Pancreas (tissue), 10 donors: ENCODE measurements at regions of chr18 and their contacts with region 1.

Region 1: DNA sequence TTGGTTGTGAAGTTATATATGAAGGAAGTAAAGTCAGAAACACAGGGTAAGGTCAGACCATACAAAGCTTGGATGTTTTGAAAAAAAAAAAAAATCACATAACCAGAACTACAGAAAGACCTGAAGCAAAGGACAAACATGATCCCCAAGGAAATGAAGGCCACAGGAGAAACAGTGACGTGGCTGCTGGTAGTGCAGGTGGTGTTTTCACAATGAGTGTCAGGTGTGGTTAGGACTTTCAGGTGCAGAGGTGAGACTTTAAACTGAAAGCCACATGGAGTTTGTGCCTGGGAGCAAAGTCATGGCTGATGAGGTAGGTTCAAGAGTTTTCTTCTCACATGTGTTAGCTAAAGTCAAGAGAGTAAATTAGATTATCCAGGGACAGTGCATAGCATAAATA is 270.7 kb downstream of the PIEZO2 start:
- DNase-seq: peak in 4 of 6 donors; percentile 30 to 71 (median 63)
- ATAC-seq: peak; percentile 87 to 97 (median 92)
- H3K4me3 ChIP-seq: no peak overlapping the region
- H3K27ac ChIP-seq: peak overlapping the region in 2 of 4 donors; percentile 26 to 42
- H3K4me1 ChIP-seq: peaks cover 0 to 2% (median 0%) of the 10 kb centered on the region in 3 donors
- H3K27me3 ChIP-seq: no peaks in the 10 kb centered on the region
- CTCF ChIP-seq: no peak

Region 2: DNA sequence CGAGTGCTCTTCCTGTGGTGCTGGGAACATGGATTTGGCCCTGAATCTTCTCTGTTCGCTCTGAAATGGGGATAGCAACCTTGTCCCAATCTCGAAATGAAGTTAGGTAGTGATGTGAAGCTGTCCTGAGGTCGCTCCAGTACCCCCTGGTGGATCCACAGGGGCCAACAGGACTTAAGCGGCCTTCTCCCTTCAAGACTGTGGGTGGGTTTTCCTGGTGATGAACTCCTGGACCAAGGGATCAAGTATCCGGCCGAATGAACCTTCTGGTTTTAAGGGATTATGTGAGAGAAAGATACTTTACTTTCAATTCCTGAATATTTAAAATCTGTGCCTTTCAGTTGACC is 196.4 kb before region 1 on chr18:
- intact Hi-C with region 1: no loop called
- DNase-seq: no peak
- ATAC-seq: no peak
- H3K4me3 ChIP-seq: no peak overlapping the region
- H3K27ac ChIP-seq: no peak overlapping the region
- H3K4me1 ChIP-seq: no peaks in the 10 kb centered on the region
- H3K27me3 ChIP-seq: no peaks in the 10 kb centered on the region
- CTCF ChIP-seq: no peak

Region 3: DNA sequence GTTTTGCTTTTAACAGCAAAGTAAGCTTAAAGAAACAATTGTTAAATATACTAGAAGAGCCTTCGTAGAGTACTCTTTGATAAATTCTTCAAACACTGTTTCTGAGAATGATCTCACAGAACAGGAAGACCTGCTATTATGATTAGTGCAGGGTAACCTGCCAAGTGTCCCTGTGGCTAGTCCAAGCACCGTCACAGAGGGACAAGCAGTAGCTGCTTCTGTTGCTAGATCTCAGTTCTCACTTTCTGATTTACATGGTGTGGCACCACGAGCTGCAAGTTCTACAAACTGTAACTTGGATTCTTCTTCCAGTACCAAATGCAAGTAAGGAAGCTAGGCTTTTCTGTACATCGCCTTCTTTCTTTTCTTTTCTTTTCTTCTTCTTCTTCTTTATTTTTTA is 149.2 kb after region 1 on chr18:
- intact Hi-C with region 1: loop called in 1 of 3 experiments (anchors 10 kb)
- DNase-seq: no peak
- ATAC-seq: no peak
- H3K4me3 ChIP-seq: no peak overlapping the region
- H3K27ac ChIP-seq: no peak overlapping the region
- H3K4me1 ChIP-seq: no peaks in the 10 kb centered on the region
- H3K27me3 ChIP-seq: no peaks in the 10 kb centered on the region
- CTCF ChIP-seq: no peak